PC-9 (cell line): ENCODE measurements at regions of chr7 and their contacts with region 1.

Region 1: GRCh38 chr7:22586786-22587140 is 86.8 kb upstream of the STEAP1B start:
- DNase-seq: peak in 1 of 2 experiments; percentile 67
- H3K4me3 ChIP-seq: no peak overlapping the region
- H3K27ac ChIP-seq: no peak overlapping the region
- H3K4me1 ChIP-seq: peaks cover 46% of the 10 kb centered on the region
- H3K27me3 ChIP-seq: no peaks in the 10 kb centered on the region
- CTCF ChIP-seq: peak; percentile 83

Region 2: DNA sequence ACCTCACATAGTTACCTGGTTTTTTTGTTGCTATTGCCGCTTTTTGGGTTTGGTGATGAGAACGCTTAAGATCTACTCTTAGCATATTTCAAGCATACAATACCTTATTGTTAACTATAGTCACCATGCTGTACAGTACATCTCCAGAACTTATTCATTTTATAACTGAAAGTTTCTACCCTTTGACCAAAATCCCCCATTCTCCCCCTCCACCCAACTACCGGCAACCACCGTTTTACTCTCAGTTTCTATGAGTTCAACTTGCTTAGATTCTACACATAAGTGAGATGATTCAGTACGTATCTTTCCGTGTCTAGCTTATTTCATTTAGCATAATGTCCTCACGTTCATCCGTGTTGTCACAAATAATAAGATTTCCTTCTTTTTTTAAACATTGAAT is 53.5 kb after region 1 on chr7:
- CTCF ChIA-PET with region 1: no interaction called
- POLR2A ChIA-PET with region 1: interaction called, 20 read pairs
- intact Hi-C with region 1: no loop called
- DNase-seq: no peak
- H3K4me3 ChIP-seq: no peak overlapping the region
- H3K27ac ChIP-seq: no peak overlapping the region
- H3K4me1 ChIP-seq: no peaks in the 10 kb centered on the region
- H3K27me3 ChIP-seq: no peaks in the 10 kb centered on the region
- CTCF ChIP-seq: no peak

Region 3: DNA sequence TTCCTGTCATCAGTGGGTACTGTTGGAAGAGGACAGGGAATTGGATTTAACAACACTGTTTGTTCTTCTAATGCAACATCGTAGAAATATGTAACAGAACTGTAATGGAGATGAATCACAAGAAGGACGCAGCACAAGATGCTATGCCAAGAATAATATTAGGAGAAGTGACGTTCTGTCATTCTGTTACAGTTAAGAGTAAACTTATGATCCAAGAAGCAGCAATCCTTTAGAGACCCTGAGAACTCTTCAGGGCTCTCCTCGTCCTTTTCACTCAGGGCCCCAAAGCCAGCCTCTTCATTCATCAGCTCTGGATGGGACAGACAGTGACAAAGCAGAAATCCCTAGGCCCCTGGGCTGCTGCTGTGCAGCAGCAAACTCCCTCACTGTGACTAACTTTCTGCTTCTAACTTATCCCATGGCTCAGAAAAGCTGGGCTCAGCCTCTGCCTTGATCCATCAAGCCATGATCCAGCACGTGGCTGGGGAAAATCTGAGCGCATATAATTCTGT is 131.5 kb after region 1 on chr7:
- CTCF ChIA-PET with region 1: no interaction called
- POLR2A ChIA-PET with region 1: interaction called, 19 read pairs
- intact Hi-C with region 1: no loop called
- DNase-seq: peak; percentile 18 to 94
- H3K4me3 ChIP-seq: no peak overlapping the region
- H3K27ac ChIP-seq: peak overlapping the region; percentile 69
- H3K4me1 ChIP-seq: peaks cover 20% of the 10 kb centered on the region
- H3K27me3 ChIP-seq: no peaks in the 10 kb centered on the region
- CTCF ChIP-seq: no peak

Region 4: DNA sequence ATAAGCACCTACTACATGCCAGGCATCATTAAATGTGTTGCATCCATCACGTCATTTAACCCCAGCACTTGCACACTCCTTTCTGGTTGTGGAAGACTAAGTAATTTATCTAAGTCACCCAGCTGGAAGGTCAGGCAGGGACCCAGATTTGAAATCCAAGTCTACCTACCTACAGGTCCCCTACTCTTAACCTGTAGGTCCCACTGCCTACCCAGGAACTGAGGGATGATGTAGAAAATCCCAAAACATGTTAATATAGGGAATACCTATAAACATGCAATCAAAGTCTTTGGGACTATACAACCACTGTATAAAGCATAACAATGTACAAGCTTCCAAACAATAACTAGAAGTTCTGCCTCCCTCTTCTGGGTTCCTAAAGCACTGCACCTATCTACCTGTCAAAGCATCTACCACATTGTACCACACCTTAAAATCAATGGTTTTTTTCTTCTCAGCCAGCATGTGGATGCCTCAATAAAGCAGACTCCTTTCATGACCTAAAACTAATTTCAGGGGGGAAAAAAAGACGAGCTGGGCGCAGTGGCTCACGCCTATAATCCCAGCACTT is 145.9 kb after region 1 on chr7:
- CTCF ChIA-PET with region 1: interaction called, 10 read pairs
- POLR2A ChIA-PET with region 1: no interaction called
- intact Hi-C with region 1: no loop called
- DNase-seq: peak; percentile 33 to 70
- H3K4me3 ChIP-seq: no peak overlapping the region
- H3K27ac ChIP-seq: no peak overlapping the region
- H3K4me1 ChIP-seq: peaks cover 35% of the 10 kb centered on the region
- H3K27me3 ChIP-seq: no peaks in the 10 kb centered on the region
- CTCF ChIP-seq: peak; percentile 86